Activated naive CD4-positive, alpha-beta T cell treated with anti-CD3 and anti-CD28 coated beads, Interleukin-2, amount 10 ng/mL, durations not matched to agents 7 days and 5 days (primary cell): ENCODE measurements at regions of chr7 and their contacts with region 1.

Region 1: GRCh38 chr7:37495574-37496184 is 47.0 kb upstream of the ELMO1 start:
- DNase-seq: no peak
- H3K4me3 Mint-ChIP-seq: no peak overlapping the region
- H3K27ac Mint-ChIP-seq: no peak overlapping the region
- H3K4me1 Mint-ChIP-seq: peaks cover 8% of the 10 kb centered on the region
- H3K27me3 Mint-ChIP-seq: no peaks in the 10 kb centered on the region

Region 2: DNA sequence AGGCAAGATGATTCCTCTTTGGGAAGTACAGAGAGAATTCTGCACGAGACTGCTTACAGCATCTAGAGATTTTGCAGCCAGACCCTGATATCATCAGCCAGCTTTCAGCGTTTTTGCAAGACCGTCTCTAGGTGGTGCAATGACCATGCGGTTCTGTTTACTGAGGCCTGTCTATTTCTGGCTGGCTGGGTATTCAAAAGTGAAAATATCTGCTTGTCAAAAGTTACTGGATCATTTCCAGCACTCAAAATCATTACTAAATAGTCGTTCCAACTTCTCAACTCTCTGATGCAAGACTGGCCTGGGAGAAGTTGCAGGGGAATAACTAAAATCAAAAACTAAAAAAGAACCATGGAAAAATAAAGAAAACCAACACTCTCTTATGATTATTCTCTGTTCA is 287.2 kb before region 1 on chr7:
- CTCF ChIA-PET with region 1: interaction called, 12 read pairs
- DNase-seq: peak; percentile 56
- H3K4me3 Mint-ChIP-seq: no peak overlapping the region
- H3K27ac Mint-ChIP-seq: peak overlapping the region; percentile 55
- H3K4me1 Mint-ChIP-seq: peaks cover 20% of the 10 kb centered on the region
- H3K27me3 Mint-ChIP-seq: no peaks in the 10 kb centered on the region

Region 3: DNA sequence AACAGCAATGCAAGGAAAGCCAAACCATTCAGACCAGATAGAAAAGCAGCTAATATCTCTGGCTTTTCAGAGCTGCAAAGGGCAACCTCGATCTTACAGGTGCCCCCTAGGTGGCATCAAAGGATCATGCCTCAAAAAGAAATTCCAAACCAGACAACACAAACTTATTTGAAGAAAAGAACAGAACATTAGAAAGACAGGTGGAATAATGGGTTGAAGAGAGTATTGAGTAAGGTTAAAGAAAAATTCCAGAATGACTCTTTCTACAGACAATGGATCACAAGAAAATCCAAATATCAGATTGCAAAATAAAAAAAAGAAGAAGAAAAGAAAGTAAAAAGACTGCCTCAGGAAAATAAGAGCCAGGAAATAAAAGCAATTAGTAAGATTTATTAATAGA is 260.8 kb before region 1 on chr7:
- CTCF ChIA-PET with region 1: interaction called, 12 read pairs
- DNase-seq: peak; percentile 29
- H3K4me3 Mint-ChIP-seq: no peak overlapping the region
- H3K27ac Mint-ChIP-seq: no peak overlapping the region
- H3K4me1 Mint-ChIP-seq: peaks cover 9% of the 10 kb centered on the region
- H3K27me3 Mint-ChIP-seq: no peaks in the 10 kb centered on the region

Region 4: DNA sequence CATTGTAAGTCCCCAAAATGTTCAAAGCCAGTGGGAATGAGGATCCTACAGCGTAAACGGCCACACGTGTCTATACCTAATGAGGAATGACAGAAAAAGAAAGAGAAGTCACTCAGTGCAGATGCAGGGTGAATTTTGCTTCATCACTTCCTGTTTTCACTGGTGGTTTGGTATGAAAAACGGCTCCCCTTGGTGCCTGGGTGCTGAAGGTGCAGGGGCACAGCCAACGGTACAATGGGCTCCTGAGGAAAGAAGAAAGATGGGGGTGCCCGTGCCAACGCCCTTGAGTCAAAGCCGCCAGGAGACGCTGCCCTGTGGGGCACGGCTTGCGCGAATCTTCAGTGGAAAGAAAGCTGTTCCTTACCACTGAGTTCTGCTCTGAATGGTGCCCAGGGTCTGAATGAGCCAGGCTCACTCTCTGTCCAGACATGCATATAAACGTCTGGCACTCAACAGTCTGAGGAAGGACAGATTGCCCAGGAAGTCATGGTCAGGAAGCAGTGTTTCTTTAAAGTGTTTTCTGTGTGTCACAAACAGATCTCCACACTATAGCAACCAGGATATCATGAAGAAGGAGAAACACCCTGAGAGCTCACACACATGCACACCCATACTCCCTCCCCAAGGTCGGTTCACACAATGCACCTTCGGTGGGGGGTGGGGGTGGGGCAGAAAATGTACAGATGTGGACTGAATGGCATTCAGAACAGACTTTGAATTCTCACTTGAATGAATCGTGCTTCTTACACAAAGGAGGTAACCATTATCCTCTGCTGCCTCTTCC is 152.8 kb before region 1 on chr7:
- CTCF ChIA-PET with region 1: no interaction called
- DNase-seq: peak; percentile 82
- H3K4me3 Mint-ChIP-seq: peak overlapping the region; percentile 89
- H3K27ac Mint-ChIP-seq: peak overlapping the region; percentile 96
- H3K4me1 Mint-ChIP-seq: peaks cover 87% of the 10 kb centered on the region
- H3K27me3 Mint-ChIP-seq: no peaks in the 10 kb centered on the region

Region 5: GRCh38 chr7:37510043-37510634 is 14.5 kb after region 1 on chr7:
- CTCF ChIA-PET with region 1: interaction called, 12 read pairs
- DNase-seq: peak; percentile 34
- H3K4me3 Mint-ChIP-seq: no peak overlapping the region
- H3K27ac Mint-ChIP-seq: no peak overlapping the region
- H3K4me1 Mint-ChIP-seq: no peaks in the 10 kb centered on the region
- H3K27me3 Mint-ChIP-seq: peaks cover 15% of the 10 kb centered on the region

Region 6: DNA sequence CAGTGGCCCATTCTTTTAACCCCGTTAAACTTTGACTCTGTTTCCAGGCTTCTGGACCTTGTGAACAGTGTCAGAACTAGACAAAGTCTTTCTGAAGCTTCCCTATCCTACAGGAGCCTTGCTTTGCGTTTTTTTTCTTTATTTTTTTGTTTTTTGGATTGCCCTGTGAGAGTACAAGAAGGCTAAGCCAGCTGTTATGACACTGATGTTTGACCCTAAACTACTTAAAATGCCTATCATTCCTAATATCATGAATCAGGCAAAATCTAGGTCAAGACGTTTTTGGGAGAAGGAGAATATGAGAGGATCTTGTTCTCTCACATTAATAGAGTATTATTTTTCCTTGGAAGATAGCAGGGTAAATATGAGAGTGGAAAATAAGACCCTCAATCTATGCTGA is 504.6 kb after region 1 on chr7:
- CTCF ChIA-PET with region 1: no interaction called
- DNase-seq: no peak
- H3K4me3 Mint-ChIP-seq: no peak overlapping the region
- H3K27ac Mint-ChIP-seq: no peak overlapping the region
- H3K4me1 Mint-ChIP-seq: no peaks in the 10 kb centered on the region
- H3K27me3 Mint-ChIP-seq: peaks cover 5% of the 10 kb centered on the region